Activated B cell treated with CpG ODN at 0.5 μM for 24 hours (primary cell): ENCODE measurements at regions of chr10 and their contacts with region 1.

Region 1: GRCh38 chr10:63521416-63522276 is 445 bp downstream of the REEP3 start:
- DNase-seq: peak; percentile 72
- ATAC-seq: peak; percentile 70
- H3K4me3 Mint-ChIP-seq: peak overlapping the region; percentile 86
- H3K27ac Mint-ChIP-seq: peak overlapping the region; percentile 72
- H3K4me1 Mint-ChIP-seq: peaks cover 47% of the 10 kb centered on the region
- H3K27me3 Mint-ChIP-seq: no peaks in the 10 kb centered on the region
- CTCF ChIP-seq: no peak

Region 2: GRCh38 chr10:63506554-63506953 is 15.1 kb before region 1 on chr10:
- CTCF ChIA-PET with region 1: no interaction called
- POLR2A ChIA-PET with region 1: interaction called, 3 read pairs
- intact Hi-C with region 1: loop called (anchors 2 kb)
- DNase-seq: no peak
- ATAC-seq: no peak
- H3K4me3 Mint-ChIP-seq: no peak overlapping the region
- H3K27ac Mint-ChIP-seq: no peak overlapping the region
- H3K4me1 Mint-ChIP-seq: peaks cover 19% of the 10 kb centered on the region
- H3K27me3 Mint-ChIP-seq: no peaks in the 10 kb centered on the region
- CTCF ChIP-seq: no peak

Region 3: DNA sequence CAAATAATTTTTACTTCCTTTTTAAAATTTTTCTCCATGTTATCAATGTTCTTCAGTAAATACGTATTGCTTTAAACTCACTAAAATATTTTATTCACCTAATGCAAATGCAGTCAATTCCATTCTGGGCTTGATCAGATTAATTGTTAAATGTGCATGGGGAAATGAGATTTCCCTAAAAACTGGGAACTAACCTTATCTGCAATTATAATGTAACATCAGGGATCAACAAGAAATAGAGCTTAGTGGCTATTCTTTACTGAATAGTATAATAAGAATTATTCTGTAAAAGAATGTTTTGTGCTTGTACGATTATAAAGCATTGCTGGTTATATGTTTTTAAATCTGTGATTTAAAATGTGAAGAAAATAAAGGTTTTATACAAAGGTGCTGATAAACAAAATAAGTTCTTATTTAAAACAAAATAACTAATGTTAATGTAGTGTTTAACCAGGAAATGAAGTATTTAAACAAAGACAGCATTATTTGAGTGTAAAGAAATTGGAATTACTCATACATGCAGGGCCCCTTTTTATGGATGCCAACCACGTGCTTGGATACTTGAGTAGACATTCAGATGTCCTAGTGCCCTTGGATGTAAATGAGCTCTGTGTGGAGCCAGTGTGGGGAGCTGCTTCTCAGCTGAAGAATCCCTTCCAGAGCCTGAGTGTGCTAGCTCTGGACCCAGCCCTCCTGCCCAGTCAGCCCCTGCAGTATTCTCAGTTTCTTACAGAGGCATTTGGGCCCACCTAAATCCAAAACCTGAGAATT is 83.7 kb after region 1 on chr10:
- CTCF ChIA-PET with region 1: no interaction called
- POLR2A ChIA-PET with region 1: interaction called, 5 read pairs
- intact Hi-C with region 1: loop called (anchors 5 kb)
- DNase-seq: no peak
- ATAC-seq: no peak
- H3K4me3 Mint-ChIP-seq: no peak overlapping the region
- H3K27ac Mint-ChIP-seq: no peak overlapping the region
- H3K4me1 Mint-ChIP-seq: peaks cover 37% of the 10 kb centered on the region
- H3K27me3 Mint-ChIP-seq: no peaks in the 10 kb centered on the region
- CTCF ChIP-seq: no peak